ENCODE measurements at regions of chr19 and their contacts with region 1.

Region 1: GRCh38 chr19:48965040-48965805 is at the start of gene FTL:
- DNase-seq: peak; percentile 71 to 96 (median 88)
- ATAC-seq: peak; percentile 73
- H3K4me3 ChIP-seq: peak within 1 kb of the TSS; percentile 83 to 98
- H3K4me3 Mint-ChIP-seq: peak within 1 kb of the TSS; percentile 99
- H3K27ac ChIP-seq: peak within 1 kb of the TSS; percentile 84 to 90
- H3K27ac Mint-ChIP-seq: peak within 1 kb of the TSS; percentile 99
- H3K4me1 ChIP-seq: peaks cover 49% of the 10 kb centered on the region
- H3K4me1 Mint-ChIP-seq: peaks cover 60% of the 10 kb centered on the region
- H3K27me3 ChIP-seq: no peaks in the 10 kb centered on the region
- H3K27me3 Mint-ChIP-seq: no peaks in the 10 kb centered on the region
- CTCF ChIP-seq: no peak
- total RNA-seq, gene FTL: 665 to 668 TPM

Region 2: GRCh38 chr19:48858984-48859710 is 106.1 kb before region 1 on chr19:
- CTCF ChIA-PET with region 1: interaction called, 9 read pairs
- POLR2A ChIA-PET with region 1: interaction called, 3 read pairs
- intact Hi-C with region 1: loop called (anchors 1 to 5 kb)
- DNase-seq: peak in 8 of 9 experiments; percentile 74 to 84 (median 82)
- ATAC-seq: peak; percentile 76
- H3K4me3 ChIP-seq: peak overlapping the region; percentile 49 to 55
- H3K4me3 Mint-ChIP-seq: peak overlapping the region; percentile 88
- H3K27ac ChIP-seq: no peak overlapping the region
- H3K27ac Mint-ChIP-seq: peak overlapping the region; percentile 87
- H3K4me1 ChIP-seq: no peaks in the 10 kb centered on the region
- H3K4me1 Mint-ChIP-seq: peaks cover 3% of the 10 kb centered on the region
- H3K27me3 ChIP-seq: no peaks in the 10 kb centered on the region
- H3K27me3 Mint-ChIP-seq: no peaks in the 10 kb centered on the region
- CTCF ChIP-seq: no peak

Region 3: GRCh38 chr19:48899781-48900476 is 65.3 kb before region 1 on chr19 and contains the start of gene NUCB1:
- CTCF ChIA-PET with region 1: interaction called, 6 read pairs
- POLR2A ChIA-PET with region 1: interaction called, 8 read pairs
- intact Hi-C with region 1: loop called (anchors 2 kb)
- DNase-seq: peak; percentile 96 to 99 (median 98)
- ATAC-seq: peak; percentile 95
- H3K4me3 ChIP-seq: peak within 1 kb of the TSS; percentile 85 to 98
- H3K4me3 Mint-ChIP-seq: peak within 1 kb of the TSS; percentile 94
- H3K27ac ChIP-seq: peak within 1 kb of the TSS; percentile 77 to 78
- H3K27ac Mint-ChIP-seq: peak within 1 kb of the TSS; percentile 95
- H3K4me1 ChIP-seq: peaks cover 29% of the 10 kb centered on the region
- H3K4me1 Mint-ChIP-seq: peaks cover 30% of the 10 kb centered on the region
- H3K27me3 ChIP-seq: no peaks in the 10 kb centered on the region
- H3K27me3 Mint-ChIP-seq: peaks cover 2% of the 10 kb centered on the region
- CTCF ChIP-seq: no peak
- total RNA-seq, gene NUCB1: 55.4 to 66.7 TPM

Region 4: DNA sequence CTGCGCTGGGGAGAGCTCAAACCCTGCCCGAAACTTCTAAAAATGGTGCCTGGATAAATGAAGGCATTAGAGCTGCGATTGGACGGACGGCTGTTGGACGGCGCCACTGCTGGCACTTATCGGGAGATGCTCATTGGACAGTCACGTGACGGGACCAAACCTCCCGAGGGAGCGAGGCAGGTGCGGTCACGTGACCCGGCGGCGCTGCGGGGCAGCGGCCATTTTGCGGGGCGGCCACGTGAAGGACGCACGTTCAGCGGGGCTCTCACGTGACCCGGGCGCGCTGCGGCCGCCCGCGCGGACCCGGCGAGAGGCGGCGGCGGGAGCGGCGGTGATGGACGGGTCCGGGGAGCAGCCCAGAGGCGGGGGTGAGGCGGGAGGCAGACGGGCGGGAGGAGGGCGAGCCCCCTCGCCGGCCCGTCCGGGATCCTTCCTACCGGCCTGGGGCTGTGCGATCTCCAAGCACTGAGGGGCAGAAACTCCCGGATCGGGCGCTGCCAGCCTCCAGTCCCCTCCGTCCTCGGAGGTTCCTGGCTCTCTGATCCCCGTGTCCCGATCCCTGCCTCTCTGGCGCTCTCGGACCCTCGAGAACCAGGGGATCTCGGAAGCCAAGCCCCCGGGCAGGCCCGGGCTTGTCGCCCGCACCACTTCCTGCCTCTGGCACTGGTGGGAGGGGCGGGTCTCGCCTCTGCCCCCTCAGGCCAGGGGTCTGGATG is 10.5 kb before region 1 on chr19 and contains the start of gene BAX:
- CTCF ChIA-PET with region 1: interaction called, 6 read pairs
- POLR2A ChIA-PET with region 1: interaction called, 39 read pairs
- intact Hi-C with region 1: loop called (anchors 1 kb)
- DNase-seq: peak; percentile 61 to 91 (median 81)
- ATAC-seq: peak; percentile 86
- H3K4me3 ChIP-seq: peak within 1 kb of the TSS; percentile 60 to 98
- H3K4me3 Mint-ChIP-seq: peak within 1 kb of the TSS; percentile 91
- H3K27ac ChIP-seq: peak within 1 kb of the TSS; percentile 69 to 93
- H3K27ac Mint-ChIP-seq: peak within 1 kb of the TSS; percentile 85
- H3K4me1 ChIP-seq: peaks cover 19% of the 10 kb centered on the region
- H3K4me1 Mint-ChIP-seq: peaks cover 29% of the 10 kb centered on the region
- H3K27me3 ChIP-seq: no peaks in the 10 kb centered on the region
- H3K27me3 Mint-ChIP-seq: no peaks in the 10 kb centered on the region
- CTCF ChIP-seq: no peak
- total RNA-seq, gene BAX: 55.7 to 57.4 TPM

Region 5: DNA sequence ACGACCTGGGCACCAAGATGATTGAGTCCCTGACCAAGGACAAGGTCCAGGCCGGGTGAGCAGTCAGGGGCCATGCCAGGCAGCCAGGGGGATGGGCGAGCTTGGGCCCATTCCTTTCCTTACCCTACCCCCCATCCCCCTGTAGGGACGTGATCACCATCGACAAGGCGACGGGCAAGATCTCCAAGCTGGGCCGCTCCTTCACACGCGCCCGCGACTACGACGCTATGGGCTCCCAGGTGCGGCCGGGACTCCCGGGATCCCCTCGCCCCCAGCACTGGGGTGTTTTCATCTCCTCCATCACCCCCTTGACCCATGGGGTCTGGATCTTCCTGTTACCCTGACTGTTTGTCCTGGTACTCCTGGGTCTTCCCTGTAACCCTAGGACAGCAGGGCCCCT is 44.6 kb after region 1 on chr19:
- CTCF ChIA-PET with region 1: no interaction called
- POLR2A ChIA-PET with region 1: no interaction called
- intact Hi-C with region 1: no loop called
- DNase-seq: no peak
- ATAC-seq: no peak
- H3K4me3 ChIP-seq: no peak overlapping the region
- H3K4me3 Mint-ChIP-seq: no peak overlapping the region
- H3K27ac ChIP-seq: no peak overlapping the region
- H3K27ac Mint-ChIP-seq: no peak overlapping the region
- H3K4me1 ChIP-seq: no peaks in the 10 kb centered on the region
- H3K4me1 Mint-ChIP-seq: no peaks in the 10 kb centered on the region
- H3K27me3 ChIP-seq: no peaks in the 10 kb centered on the region
- H3K27me3 Mint-ChIP-seq: no peaks in the 10 kb centered on the region
- CTCF ChIP-seq: no peak

Region 6: DNA sequence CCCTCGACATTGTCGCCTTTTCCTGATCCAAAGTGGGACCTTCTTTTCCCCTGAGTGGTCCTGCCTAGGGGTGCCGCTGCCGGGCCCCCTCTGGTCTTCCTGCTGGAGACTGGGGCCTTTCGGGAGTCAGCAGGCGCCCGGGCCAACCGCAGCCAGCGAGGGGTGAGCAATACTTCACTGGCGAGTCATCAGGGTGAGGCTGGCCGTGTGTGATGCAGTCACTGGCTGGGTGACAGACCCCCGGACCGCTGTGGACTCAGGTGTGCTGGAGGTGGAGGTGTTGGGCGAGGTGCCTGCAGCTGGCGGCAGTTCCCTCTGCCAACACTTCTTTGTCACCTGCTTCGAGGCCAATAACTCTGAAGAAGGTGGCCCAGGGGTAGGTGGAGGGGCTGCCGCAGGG is 77.0 kb after region 1 on chr19:
- CTCF ChIA-PET with region 1: no interaction called
- POLR2A ChIA-PET with region 1: no interaction called
- intact Hi-C with region 1: no loop called
- DNase-seq: no peak
- ATAC-seq: no peak
- H3K4me3 ChIP-seq: no peak overlapping the region
- H3K4me3 Mint-ChIP-seq: no peak overlapping the region
- H3K27ac ChIP-seq: no peak overlapping the region
- H3K27ac Mint-ChIP-seq: no peak overlapping the region
- H3K4me1 ChIP-seq: no peaks in the 10 kb centered on the region
- H3K4me1 Mint-ChIP-seq: no peaks in the 10 kb centered on the region
- H3K27me3 ChIP-seq: no peaks in the 10 kb centered on the region
- H3K27me3 Mint-ChIP-seq: no peaks in the 10 kb centered on the region
- CTCF ChIP-seq: no peak

Region 7: DNA sequence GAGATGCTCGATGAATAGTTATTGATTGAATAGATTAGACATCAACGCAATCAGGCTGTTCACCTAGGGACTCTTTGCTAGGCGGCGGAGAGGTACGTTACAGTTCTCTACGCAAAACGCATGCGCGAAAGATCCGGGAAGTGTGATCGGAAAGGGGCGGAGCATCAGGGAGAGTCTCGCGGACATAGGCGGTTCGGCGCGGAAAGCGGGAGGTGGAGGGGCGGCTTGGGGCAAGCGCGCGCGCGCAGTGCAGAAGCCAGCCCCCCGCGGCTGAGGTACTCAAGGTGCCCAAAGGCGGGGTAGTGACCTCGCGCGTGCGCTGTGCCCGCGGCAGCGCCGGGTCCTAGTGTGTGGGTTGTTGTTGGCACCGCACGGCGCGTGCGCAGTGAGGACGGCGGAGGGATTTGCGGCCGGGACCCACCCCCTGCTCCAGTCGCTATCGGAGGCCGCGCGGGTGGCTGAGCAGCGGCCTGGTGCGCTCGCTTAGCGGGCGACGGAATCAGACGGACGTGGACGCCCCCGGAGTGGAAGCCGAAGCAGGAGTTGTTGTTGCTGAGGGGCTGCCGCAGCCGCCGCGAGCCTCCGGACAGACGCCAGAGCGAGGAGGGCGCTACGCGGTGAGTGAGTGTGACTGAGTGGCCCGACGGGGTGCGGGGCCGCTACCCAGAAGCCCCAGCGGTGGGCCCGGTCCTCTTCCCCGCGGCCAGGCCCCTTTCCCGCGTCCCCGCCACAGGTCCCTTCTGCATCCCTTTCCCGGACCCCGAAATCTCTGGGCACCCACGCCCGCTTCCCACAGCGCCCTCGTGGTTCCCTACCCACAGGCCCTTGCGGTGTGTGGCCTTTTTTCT is 120.0 kb after region 1 on chr19 and contains the start of gene SNRNP70:
- CTCF ChIA-PET with region 1: no interaction called
- POLR2A ChIA-PET with region 1: no interaction called
- intact Hi-C with region 1: loop called in 1 of 2 experiments (anchors 1 kb)
- DNase-seq: peak; percentile 97 to 100 (median 99)
- ATAC-seq: peak; percentile 97
- H3K4me3 ChIP-seq: peak within 1 kb of the TSS; percentile 85 to 91
- H3K4me3 Mint-ChIP-seq: peak within 1 kb of the TSS; percentile 96
- H3K27ac ChIP-seq: peak within 1 kb of the TSS; percentile 74 to 90
- H3K27ac Mint-ChIP-seq: peak within 1 kb of the TSS; percentile 96
- H3K4me1 ChIP-seq: peaks cover 33% of the 10 kb centered on the region
- H3K4me1 Mint-ChIP-seq: peaks cover 33% of the 10 kb centered on the region
- H3K27me3 ChIP-seq: no peaks in the 10 kb centered on the region
- H3K27me3 Mint-ChIP-seq: peaks cover 4% of the 10 kb centered on the region
- CTCF ChIP-seq: no peak
- total RNA-seq, gene SNRNP70: 341 to 350 TPM

Measured in CD8-positive, alpha-beta T cell (primary cell).